ENCODE measurements at regions of chr20 and their contacts with region 1.

Region 1: GRCh38 chr20:60447703-60448102 is 489.5 kb downstream of the CDH26 start:
- DNase-seq: no peak

Region 2: GRCh38 chr20:60491051-60491623 is 43.4 kb after region 1 on chr20:
- intact Hi-C with region 1: loop called in 1 of 2 experiments (anchors 1 kb)
- DNase-seq: no peak

Measured in posterior vena cava (tissue), 2 donors.